PC-9 (cell line): ENCODE measurements at regions of chr6 and their contacts with region 1.

Region 1: DNA sequence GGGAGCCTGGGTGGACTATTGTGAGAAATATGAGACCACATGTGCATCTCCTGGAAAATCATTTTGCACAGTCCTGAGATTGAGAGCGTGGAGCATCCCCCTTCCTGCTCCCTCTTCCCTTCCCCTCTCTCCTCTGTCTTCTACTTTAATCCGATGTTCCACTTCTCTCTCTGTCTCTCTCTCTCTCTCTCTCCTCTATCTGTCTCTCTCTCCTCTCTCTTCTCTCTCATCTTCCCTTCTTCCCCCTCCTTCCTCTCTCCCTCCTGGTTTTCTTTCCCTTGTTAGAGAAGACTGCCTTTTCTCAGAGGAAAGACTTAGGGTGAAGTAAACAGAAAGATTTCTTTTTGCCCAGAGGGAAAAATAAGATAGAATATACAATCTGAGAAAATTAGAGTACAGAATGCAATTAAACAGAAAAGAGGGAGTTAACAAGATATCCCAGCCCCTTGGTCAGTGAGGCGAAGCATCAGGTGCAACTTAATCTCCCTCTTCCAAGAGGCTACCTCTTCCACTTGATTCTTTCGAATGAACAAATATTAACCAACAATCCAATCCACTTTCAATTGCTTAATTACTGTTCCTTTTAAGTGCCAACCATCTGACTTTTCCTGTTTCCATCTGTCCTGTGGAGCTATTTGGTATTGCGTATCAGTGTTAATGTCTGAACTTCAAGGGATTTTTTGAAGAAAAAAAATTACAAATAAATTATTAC is 14.6 kb downstream of the KHDC1 start:
- DNase-seq: no peak
- H3K4me3 ChIP-seq: no peak overlapping the region
- H3K27ac ChIP-seq: no peak overlapping the region
- H3K4me1 ChIP-seq: no peaks in the 10 kb centered on the region
- H3K27me3 ChIP-seq: no peaks in the 10 kb centered on the region
- CTCF ChIP-seq: no peak

Region 2: DNA sequence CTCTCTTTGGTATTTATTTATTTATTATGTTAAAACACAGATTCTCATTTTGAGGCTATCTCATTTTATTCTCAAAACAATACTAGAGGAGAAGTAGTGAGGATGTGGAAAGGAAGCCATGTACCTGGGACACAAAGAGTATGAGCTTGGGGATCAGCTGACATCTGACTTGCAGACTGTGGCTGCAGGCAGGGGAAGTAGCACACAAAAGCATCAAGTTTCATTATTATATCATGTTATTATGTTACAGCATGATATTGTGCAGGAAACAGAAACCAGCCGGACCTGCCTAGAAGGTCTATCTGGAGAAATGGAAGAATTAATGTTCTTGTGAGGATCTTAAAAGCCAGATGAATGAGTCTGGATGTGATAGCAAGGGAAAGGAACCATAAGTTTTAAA is 271.2 kb before region 1 on chr6:
- CTCF ChIA-PET with region 1: no interaction called
- POLR2A ChIA-PET with region 1: no interaction called
- intact Hi-C with region 1: no loop called
- DNase-seq: no peak
- H3K4me3 ChIP-seq: no peak overlapping the region
- H3K27ac ChIP-seq: no peak overlapping the region
- H3K4me1 ChIP-seq: no peaks in the 10 kb centered on the region
- H3K27me3 ChIP-seq: no peaks in the 10 kb centered on the region
- CTCF ChIP-seq: no peak

Region 3: GRCh38 chr6:73085443-73085871 is 162.9 kb before region 1 on chr6:
- CTCF ChIA-PET with region 1: no interaction called
- POLR2A ChIA-PET with region 1: no interaction called
- intact Hi-C with region 1: no loop called
- DNase-seq: no peak
- H3K4me3 ChIP-seq: no peak overlapping the region
- H3K27ac ChIP-seq: no peak overlapping the region
- H3K4me1 ChIP-seq: no peaks in the 10 kb centered on the region
- H3K27me3 ChIP-seq: no peaks in the 10 kb centered on the region
- CTCF ChIP-seq: no peak

Region 4: GRCh38 chr6:73258721-73259120 is 10.4 kb after region 1 on chr6:
- CTCF ChIA-PET with region 1: no interaction called
- POLR2A ChIA-PET with region 1: interaction called, 15 read pairs
- intact Hi-C with region 1: no loop called
- DNase-seq: no peak
- H3K4me3 ChIP-seq: no peak overlapping the region
- H3K27ac ChIP-seq: no peak overlapping the region
- H3K4me1 ChIP-seq: peaks cover 6% of the 10 kb centered on the region; the same call in 1 of the 2 replicates
- H3K27me3 ChIP-seq: no peaks in the 10 kb centered on the region
- CTCF ChIP-seq: no peak